ENCODE measurements at regions of chr2 and their contacts with region 1.

Region 1: DNA sequence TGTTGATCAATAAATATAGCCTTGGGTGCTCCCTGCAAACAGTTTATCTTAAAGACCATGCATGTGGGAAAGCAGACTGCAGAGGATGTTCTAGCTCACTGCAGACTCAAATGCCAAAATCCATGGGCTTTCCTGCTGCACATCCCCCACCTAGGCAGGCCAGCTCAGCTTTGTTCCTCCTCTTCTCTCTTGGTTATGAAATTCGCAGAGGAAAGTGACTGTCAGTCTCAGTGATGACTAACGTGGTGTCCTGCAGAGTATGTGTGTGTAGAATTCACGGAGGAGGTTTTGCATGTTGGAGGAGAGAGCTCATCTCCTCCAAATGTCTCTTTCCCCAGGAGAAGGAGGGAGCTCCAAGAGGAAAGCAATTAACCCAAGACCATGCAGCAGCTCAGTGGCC is 21.4 kb upstream of the KCNS3 start:
- DNase-seq: no peak
- H3K4me3 Mint-ChIP-seq: no peak overlapping the region
- H3K27ac Mint-ChIP-seq: no peak overlapping the region
- H3K4me1 Mint-ChIP-seq: no peaks in the 10 kb centered on the region
- H3K27me3 Mint-ChIP-seq: peaks cover 87% of the 10 kb centered on the region
- CTCF ChIP-seq: no peak

Region 2: DNA sequence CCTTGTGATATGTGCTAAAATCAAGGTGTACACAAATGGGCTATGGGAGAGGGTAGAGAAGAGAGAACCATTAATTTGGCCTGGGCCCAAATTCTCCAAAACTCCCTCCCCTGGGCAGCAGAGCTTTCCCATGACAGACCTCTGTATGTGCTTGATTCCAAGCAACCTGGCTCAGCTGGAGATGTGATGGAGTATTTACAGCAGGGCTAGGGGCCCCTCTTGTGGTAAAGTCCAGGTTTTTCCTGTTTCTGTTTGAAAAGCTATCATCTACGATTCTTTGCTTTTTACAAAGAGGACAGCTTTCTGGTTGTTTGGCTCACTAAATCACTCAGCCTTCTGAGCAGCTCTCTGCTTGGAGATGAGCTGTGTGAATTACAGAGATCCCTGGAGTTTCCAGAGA is 61.8 kb after region 1 on chr2:
- CTCF ChIA-PET with region 1: interaction called, 4 read pairs
- intact Hi-C with region 1: loop called (anchors 5 kb)
- DNase-seq: no peak
- H3K4me3 Mint-ChIP-seq: no peak overlapping the region
- H3K27ac Mint-ChIP-seq: no peak overlapping the region
- H3K4me1 Mint-ChIP-seq: no peaks in the 10 kb centered on the region
- H3K27me3 Mint-ChIP-seq: no peaks in the 10 kb centered on the region
- CTCF ChIP-seq: no peak